Activated B cell treated with CpG ODN at 0.5 μM for 24 hours (primary cell): ENCODE measurements at regions of chr2 and their contacts with region 1.

Region 1: DNA sequence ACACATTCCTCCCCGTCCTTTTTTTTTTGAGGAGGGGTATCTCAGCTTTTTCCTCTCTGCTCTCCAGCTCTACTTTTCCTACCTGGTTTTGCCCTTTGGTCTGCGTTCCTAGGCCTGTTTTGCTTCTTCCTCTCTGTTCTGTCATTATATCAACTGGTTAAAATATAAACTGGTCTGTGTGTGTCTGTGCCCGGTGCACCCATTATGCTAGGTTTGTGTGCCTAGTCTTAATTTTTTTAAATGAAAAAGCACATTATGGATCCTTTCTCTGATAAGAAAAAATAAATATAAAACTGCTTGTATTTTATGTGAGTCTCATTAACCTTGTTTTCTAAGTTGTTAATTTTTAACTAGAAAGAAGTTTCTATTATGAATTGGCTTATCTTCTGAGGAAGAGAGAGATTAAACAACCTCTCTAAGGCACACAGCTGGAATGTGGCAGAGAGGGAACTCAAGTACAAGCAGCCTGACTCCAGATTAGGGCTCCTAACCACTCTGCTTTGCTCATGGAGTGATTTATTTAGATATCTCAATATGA is 17.4 kb downstream of the SLC38A11 start:
- DNase-seq: no peak
- ATAC-seq: no peak
- H3K4me3 Mint-ChIP-seq: peak overlapping the region; percentile 1
- H3K27ac Mint-ChIP-seq: peak overlapping the region; percentile 0
- H3K4me1 Mint-ChIP-seq: peaks cover 34% of the 10 kb centered on the region
- H3K27me3 Mint-ChIP-seq: no peaks in the 10 kb centered on the region
- CTCF ChIP-seq: no peak

Region 2: GRCh38 chr2:164745012-164745805 is 192.7 kb before region 1 on chr2:
- CTCF ChIA-PET with region 1: no interaction called
- POLR2A ChIA-PET with region 1: no interaction called
- intact Hi-C with region 1: no loop called
- DNase-seq: no peak
- ATAC-seq: peak; percentile 31
- H3K4me3 Mint-ChIP-seq: no peak overlapping the region
- H3K27ac Mint-ChIP-seq: peak overlapping the region; percentile 38
- H3K4me1 Mint-ChIP-seq: peaks cover 76% of the 10 kb centered on the region
- H3K27me3 Mint-ChIP-seq: no peaks in the 10 kb centered on the region
- CTCF ChIP-seq: no peak

Region 3: GRCh38 chr2:164850235-164850634 is 87.7 kb before region 1 on chr2:
- CTCF ChIA-PET with region 1: no interaction called
- POLR2A ChIA-PET with region 1: no interaction called
- intact Hi-C with region 1: no loop called
- DNase-seq: no peak
- ATAC-seq: peak; percentile 67
- H3K4me3 Mint-ChIP-seq: peak overlapping the region; percentile 42
- H3K27ac Mint-ChIP-seq: peak overlapping the region; percentile 26
- H3K4me1 Mint-ChIP-seq: peaks cover 17% of the 10 kb centered on the region
- H3K27me3 Mint-ChIP-seq: no peaks in the 10 kb centered on the region
- CTCF ChIP-seq: no peak

Region 4: GRCh38 chr2:164948540-164948939 is 10.6 kb after region 1 on chr2:
- CTCF ChIA-PET with region 1: interaction called, 4 read pairs
- POLR2A ChIA-PET with region 1: no interaction called
- intact Hi-C with region 1: loop called (anchors 2 kb)
- DNase-seq: no peak
- ATAC-seq: peak; percentile 45
- H3K4me3 Mint-ChIP-seq: peak overlapping the region; percentile 32
- H3K27ac Mint-ChIP-seq: no peak overlapping the region
- H3K4me1 Mint-ChIP-seq: peaks cover 30% of the 10 kb centered on the region
- H3K27me3 Mint-ChIP-seq: peaks cover 2% of the 10 kb centered on the region
- CTCF ChIP-seq: no peak

Region 5: GRCh38 chr2:164954954-164955701 is 17.2 kb after region 1 on chr2 and contains the start of gene SLC38A11:
- CTCF ChIA-PET with region 1: interaction called, 4 read pairs
- POLR2A ChIA-PET with region 1: no interaction called
- intact Hi-C with region 1: loop called (anchors 2 kb)
- DNase-seq: peak; percentile 20
- ATAC-seq: peak; percentile 66
- H3K4me3 Mint-ChIP-seq: peak within 1 kb of the TSS; percentile 66
- H3K27ac Mint-ChIP-seq: peak within 1 kb of the TSS; percentile 18
- H3K4me1 Mint-ChIP-seq: peaks cover 29% of the 10 kb centered on the region
- H3K27me3 Mint-ChIP-seq: peaks cover 2% of the 10 kb centered on the region
- CTCF ChIP-seq: no peak
- total RNA-seq, gene SLC38A11: 2.2 and 2.6 TPM in 2 replicates